GM10248 (cell line): ENCODE measurements at regions of chr21 and their contacts with region 1.

Region 1: DNA sequence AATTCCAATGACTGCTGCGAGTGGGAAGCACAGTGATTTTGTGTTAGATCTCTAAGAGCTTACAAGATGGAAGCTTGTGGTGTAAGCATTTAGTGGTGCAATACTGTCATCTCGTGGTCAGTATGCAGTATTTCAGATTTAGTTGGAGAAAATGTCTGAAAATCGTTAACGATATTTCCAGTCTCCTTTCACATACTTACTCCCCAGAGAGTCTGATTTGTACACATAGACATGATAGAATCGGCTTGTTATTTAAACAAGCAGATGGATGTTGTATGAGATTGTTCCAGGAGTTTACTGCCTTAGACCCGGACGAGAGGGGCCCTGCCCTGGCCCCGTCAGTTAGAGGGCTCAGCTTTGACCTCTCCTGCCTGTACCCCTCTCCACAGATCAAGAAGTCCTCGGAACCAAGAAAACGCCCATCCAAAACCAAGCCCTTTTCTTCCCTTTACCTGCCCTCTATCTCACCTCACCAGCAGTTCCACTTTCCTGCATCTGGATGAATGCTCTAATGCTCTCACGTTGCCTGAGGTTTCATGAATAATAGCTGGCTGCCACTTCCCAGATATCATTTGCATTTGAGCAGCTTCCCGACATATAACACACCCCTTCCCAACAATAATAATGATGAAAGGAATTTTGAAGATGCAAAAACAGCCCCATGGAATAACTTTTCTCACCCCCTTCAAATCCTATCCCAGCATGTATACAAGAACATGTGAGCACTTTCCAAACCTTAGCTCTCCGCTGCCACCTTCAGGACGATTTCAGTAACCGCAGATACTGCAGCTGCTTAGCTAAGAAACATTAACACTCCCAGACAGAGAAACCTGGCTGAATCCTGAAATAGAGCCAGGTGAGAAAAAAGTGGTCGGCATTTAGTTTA is 247.3 kb downstream of the LTN1 start:
- DNase-seq: peak; percentile 54
- CTCF ChIP-seq: peak; percentile 81

Region 2: DNA sequence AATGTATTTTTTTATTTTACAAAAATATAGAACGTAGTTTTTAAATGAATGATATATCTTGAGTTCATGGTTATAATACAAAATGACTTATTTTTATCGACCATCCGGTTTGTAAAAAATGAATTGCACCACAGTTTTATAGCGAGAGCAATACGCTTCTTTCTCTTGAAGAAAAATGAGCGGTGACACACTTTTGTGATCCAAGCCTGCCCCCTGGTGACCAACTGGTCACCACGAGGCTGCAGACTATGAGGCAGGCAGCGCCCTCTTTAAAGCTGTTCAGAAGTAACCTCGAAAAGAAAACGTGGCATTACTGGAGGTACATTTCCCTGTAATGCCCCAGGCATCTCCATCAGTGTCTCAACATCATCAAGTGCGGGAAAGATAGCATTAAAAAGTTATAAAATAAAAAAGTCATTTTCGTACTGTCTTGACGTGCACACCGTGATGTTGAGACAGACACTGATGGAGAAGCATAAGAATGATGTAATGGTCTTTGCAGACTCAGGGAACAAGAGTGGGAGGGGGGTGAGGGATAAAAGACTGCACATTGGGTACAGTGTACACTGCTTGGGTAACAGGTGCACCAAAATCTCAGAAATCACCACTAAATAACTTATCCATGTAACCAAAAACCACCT is 1044.3 kb before region 1 on chr21:
- CTCF ChIA-PET with region 1: interaction called, 10 read pairs
- POLR2A ChIA-PET with region 1: no interaction called
- DNase-seq: peak; percentile 17
- CTCF ChIP-seq: peak; percentile 79

Region 3: GRCh38 chr21:28522014-28522799 is 223.2 kb before region 1 on chr21:
- CTCF ChIA-PET with region 1: interaction called, 88 read pairs
- POLR2A ChIA-PET with region 1: no interaction called
- DNase-seq: no peak
- CTCF ChIP-seq: peak; percentile 34

Region 4: DNA sequence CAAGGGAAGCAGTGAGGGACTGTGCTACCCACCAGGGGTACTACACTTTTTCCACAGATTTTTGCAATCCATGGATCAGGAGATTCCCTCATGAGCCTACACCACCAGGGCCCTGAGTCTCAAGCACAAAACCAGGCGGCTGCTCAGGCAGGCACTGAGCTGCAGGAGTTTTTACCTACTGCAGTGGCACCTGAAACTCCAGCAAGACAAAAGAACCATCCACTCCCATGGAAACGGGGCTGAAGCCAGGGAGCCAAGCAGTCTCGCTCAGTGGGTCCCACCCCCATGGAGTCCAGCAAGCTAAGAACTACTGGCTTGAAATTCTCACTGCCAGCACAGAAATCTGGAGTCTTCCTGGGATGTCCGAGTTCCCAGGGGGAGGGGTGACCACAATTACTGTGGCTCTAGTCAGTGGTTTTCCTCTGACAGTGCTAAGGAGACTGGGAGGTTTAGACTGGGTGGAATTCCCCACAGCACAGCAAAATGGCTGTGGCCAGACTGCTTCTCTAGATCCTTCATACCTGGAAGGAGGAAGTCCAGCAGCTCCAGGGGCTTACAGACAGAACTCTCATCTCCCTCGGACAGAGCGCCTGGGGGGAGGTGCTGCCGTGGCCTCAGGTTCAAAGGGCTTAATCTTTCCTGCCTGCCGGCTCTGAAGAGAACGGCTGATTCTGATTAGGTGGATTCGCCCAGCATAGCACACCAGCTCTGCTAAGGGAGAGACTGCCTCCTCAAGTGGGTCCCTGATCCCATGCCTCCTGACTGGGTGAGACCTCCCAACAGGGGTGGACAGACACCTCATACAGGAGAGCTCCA is 190.5 kb before region 1 on chr21:
- CTCF ChIA-PET with region 1: no interaction called
- POLR2A ChIA-PET with region 1: no interaction called
- DNase-seq: no peak
- CTCF ChIP-seq: no peak

Region 5: DNA sequence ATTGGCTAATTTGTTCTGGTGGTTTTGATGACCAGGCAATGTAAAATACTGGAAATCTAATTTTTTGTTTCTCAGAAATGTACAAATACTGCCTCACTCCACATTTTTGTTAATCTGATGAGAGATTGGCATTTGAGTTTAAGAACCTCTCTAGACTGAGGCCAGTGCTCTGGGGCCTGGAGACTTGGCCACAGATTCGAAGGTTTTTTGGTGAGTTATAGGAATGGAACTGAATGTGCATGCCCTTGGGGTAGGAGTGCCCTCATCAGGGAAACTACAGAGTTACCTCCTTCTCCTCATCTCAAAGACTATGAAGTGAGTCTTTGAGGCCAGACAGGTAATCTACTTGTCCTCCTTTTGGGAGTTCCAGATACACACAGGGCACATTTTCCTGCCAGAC is 100.6 kb before region 1 on chr21:
- CTCF ChIA-PET with region 1: no interaction called
- POLR2A ChIA-PET with region 1: no interaction called
- DNase-seq: no peak
- CTCF ChIP-seq: no peak

Region 6: GRCh38 chr21:28725396-28725795 is 20.0 kb before region 1 on chr21:
- CTCF ChIA-PET with region 1: interaction called, 17 read pairs
- POLR2A ChIA-PET with region 1: no interaction called
- DNase-seq: no peak
- CTCF ChIP-seq: no peak

Region 7: GRCh38 chr21:28884976-28885852 is 139.8 kb after region 1 on chr21:
- CTCF ChIA-PET with region 1: interaction called, 15 read pairs
- POLR2A ChIA-PET with region 1: no interaction called
- DNase-seq: peak; percentile 95
- CTCF ChIP-seq: no peak